ENCODE measurements at regions of chr1 and their contacts with region 1.

Region 1: DNA sequence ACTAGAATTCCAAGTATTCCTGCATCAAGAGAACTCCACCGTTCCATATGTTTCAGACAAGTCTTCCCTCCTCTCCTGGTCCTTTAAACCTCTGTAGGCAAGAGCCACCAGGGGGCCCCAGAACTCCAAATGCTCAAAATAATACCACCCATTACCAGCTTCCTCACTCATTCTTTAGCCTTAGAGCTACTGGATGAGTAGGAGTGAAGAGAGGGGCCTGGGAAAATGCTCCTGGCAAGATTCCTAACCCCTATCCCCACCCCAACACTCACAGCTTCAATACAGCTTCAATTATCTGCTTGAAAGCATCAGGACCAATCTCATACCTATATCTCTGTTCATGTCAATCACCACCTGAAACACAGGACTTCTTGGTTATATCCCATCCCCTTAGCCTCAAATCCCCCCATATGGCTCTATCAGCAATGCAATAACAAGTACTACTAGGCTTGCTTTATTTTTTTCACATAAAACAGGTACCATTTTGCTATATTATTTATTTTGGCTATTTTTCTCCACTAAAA is 9.7 kb downstream of the TOR1AIP2 start:
- DNase-seq: peak; percentile 69
- ATAC-seq: peak; percentile 80
- H3K4me3 Mint-ChIP-seq: no peak overlapping the region
- H3K27ac Mint-ChIP-seq: no peak overlapping the region
- H3K4me1 Mint-ChIP-seq: peaks cover 17% of the 10 kb centered on the region
- H3K27me3 Mint-ChIP-seq: no peaks in the 10 kb centered on the region

Region 2: DNA sequence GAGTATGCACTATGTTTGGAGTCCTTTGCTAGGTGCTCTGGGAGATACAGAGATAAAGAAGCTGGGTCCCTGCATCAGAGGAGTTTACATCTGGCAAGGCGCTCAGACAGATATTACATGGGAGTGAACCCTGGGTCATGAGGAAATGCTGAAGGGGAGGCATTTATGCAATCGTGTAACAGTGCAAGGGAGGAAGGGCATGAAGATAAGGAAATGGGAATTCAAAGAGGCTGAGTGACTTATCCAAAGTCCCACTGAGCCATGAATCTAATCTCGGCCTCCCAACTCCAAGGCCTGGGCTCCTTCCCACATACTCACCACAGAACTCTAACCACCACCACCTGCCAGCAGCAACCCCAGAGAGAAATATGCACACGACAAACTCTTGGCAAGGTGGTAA is 73.2 kb before region 1 on chr1:
- CTCF ChIA-PET with region 1: no interaction called
- POLR2A ChIA-PET with region 1: no interaction called
- intact Hi-C with region 1: no loop called
- DNase-seq: no peak
- ATAC-seq: no peak
- H3K4me3 Mint-ChIP-seq: no peak overlapping the region
- H3K27ac Mint-ChIP-seq: no peak overlapping the region
- H3K4me1 Mint-ChIP-seq: no peaks in the 10 kb centered on the region
- H3K27me3 Mint-ChIP-seq: no peaks in the 10 kb centered on the region

Region 3: DNA sequence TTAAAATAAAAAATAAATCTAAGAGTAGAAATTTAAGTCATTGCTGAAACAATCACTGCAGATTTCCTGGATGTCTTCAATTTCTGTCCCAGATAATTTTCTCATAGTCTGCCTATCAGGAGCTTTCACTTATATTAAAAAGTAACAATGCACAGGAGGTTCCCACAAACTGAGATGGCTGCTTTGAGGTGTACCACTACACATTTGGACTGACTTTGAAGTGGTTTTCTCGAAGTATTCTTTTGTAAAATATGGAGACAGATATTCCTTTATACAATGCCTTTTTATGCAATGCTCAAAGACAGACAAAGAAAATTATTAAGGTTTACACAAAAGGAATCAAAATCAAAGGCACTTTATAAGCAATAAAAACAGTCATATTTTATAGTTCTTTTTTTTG is 14.8 kb before region 1 on chr1:
- CTCF ChIA-PET with region 1: interaction called, 18 read pairs
- POLR2A ChIA-PET with region 1: no interaction called
- intact Hi-C with region 1: no loop called
- DNase-seq: no peak
- ATAC-seq: no peak
- H3K4me3 Mint-ChIP-seq: no peak overlapping the region
- H3K27ac Mint-ChIP-seq: no peak overlapping the region
- H3K4me1 Mint-ChIP-seq: peaks cover 2% of the 10 kb centered on the region
- H3K27me3 Mint-ChIP-seq: no peaks in the 10 kb centered on the region

Region 4: GRCh38 chr1:180033390-180033789 is 165.5 kb after region 1 on chr1:
- CTCF ChIA-PET with region 1: no interaction called
- POLR2A ChIA-PET with region 1: no interaction called
- intact Hi-C with region 1: no loop called
- DNase-seq: no peak
- ATAC-seq: no peak
- H3K4me3 Mint-ChIP-seq: no peak overlapping the region
- H3K27ac Mint-ChIP-seq: no peak overlapping the region
- H3K4me1 Mint-ChIP-seq: peaks cover 5% of the 10 kb centered on the region
- H3K27me3 Mint-ChIP-seq: no peaks in the 10 kb centered on the region